CD4-positive, alpha-beta memory T cell (primary cell): ENCODE measurements at regions of chr4 and their contacts with region 1.

Region 1: DNA sequence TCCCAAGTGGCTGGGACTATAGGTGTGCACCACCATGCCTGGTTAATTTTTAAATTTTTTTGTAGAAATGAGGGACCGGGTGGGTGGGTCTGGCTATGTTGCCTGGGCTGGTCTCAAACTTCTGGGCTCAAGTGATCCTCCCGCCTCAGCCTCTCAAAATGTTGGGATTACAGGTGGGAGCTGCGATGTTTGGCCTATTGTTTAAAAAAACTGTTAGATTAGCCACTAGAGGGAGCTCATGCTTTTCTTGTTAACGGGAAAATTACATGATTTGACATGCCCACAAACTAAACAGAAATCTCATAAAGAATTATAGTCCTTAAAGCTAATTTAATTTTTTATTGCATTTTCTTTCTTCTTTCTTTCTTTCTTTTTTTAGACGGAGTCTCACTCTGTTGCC is 5.0 kb upstream of the SDAD1 start:
- DNase-seq: peak in 4 of 5 donors; percentile 52 to 62 (median 58)
- H3K4me3 ChIP-seq: no peak overlapping the region
- H3K4me3 Mint-ChIP-seq: no peak overlapping the region
- H3K27ac ChIP-seq: no peak overlapping the region
- H3K27ac Mint-ChIP-seq: no peak overlapping the region
- H3K4me1 ChIP-seq: peaks cover 4% of the 10 kb centered on the region
- H3K4me1 Mint-ChIP-seq: peaks cover 0 to 8% (median 4%) of the 10 kb centered on the region in 4 donors
- H3K27me3 ChIP-seq: no peaks in the 10 kb centered on the region
- H3K27me3 Mint-ChIP-seq: peaks cover 0 to 5% of the 10 kb centered on the region in 2 donors

Region 2: DNA sequence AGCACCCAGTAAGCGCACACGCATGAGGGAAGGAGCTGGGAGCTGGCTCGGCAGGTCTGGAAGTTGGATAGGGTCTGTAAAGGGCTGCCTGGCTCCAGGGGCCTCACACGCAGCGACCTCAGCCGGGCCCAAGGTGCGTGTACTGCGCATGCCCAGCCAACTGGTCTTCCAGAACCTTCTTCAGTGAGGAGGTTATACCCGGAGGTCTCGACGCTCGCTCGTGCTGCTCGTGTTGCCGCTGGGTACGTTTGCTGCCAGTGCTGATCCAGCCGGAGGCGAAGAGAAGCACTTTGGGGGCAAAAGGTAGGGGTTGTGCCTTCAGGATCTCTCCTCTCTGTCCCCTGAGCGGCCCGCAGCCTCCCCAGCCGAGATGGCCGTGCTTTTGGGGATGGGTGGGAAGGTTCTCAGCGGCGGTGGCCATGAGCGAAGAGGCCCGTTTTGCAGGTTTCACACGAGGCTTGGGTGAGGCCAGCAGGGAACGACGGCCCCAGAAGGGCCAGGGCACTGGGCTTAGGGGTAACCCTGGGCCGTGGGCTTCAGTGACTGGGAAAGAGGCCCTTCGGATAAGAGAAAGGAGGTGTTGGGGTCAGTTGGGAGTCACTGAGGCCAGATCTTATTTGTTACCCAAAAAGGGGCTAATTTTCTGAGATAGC is 15.4 kb after region 1 on chr4:
- CTCF ChIA-PET with region 1: interaction called, 11 read pairs
- POLR2A ChIA-PET with region 1: no interaction called
- intact Hi-C with region 1: no loop called
- DNase-seq: no peak
- H3K4me3 ChIP-seq: no peak overlapping the region
- H3K4me3 Mint-ChIP-seq: no peak overlapping the region
- H3K27ac ChIP-seq: no peak overlapping the region
- H3K27ac Mint-ChIP-seq: no peak overlapping the region
- H3K4me1 ChIP-seq: no peaks in the 10 kb centered on the region
- H3K4me1 Mint-ChIP-seq: no peaks in the 10 kb centered on the region
- H3K27me3 ChIP-seq: no peaks in the 10 kb centered on the region
- H3K27me3 Mint-ChIP-seq: peaks cover 3 to 4% of the 10 kb centered on the region in 2 donors

Region 3: GRCh38 chr4:76024065-76024464 is 28.3 kb after region 1 on chr4:
- CTCF ChIA-PET with region 1: interaction called, 11 read pairs
- POLR2A ChIA-PET with region 1: no interaction called
- intact Hi-C with region 1: no loop called
- DNase-seq: no peak
- H3K4me3 ChIP-seq: no peak overlapping the region
- H3K4me3 Mint-ChIP-seq: peak overlapping the region in 7 of 8 donors; percentile 0 to 72 (median 37)
- H3K27ac ChIP-seq: no peak overlapping the region
- H3K27ac Mint-ChIP-seq: peak overlapping the region in 3 of 7 donors; percentile 0 to 38 (median 19)
- H3K4me1 ChIP-seq: peaks cover 24% of the 10 kb centered on the region
- H3K4me1 Mint-ChIP-seq: peaks cover 19 to 32% (median 29%) of the 10 kb centered on the region in 4 donors
- H3K27me3 ChIP-seq: no peaks in the 10 kb centered on the region
- H3K27me3 Mint-ChIP-seq: no peaks in the 10 kb centered on the region

Region 4: DNA sequence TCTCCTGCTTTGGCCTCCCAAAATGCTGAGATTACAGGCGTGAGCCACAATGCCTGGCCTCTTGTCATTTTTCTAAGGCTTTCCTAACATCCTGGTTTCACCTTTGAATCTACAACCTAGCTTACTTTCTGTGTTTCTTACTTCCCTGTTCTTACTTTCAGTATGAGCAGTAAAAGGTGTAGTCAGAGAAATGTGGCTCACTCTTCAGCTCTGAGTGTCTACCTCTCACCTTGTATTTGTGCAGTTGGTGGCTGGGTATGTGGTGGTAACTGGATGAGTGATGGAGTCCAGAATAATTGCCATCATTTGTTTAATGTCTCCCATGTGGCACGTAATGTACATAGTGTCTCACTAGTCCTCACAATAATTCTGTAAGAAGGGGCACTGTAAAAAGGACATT is 59.3 kb after region 1 on chr4:
- CTCF ChIA-PET with region 1: interaction called, 15 read pairs
- POLR2A ChIA-PET with region 1: no interaction called
- intact Hi-C with region 1: no loop called
- DNase-seq: no peak
- H3K4me3 ChIP-seq: no peak overlapping the region
- H3K4me3 Mint-ChIP-seq: no peak overlapping the region
- H3K27ac ChIP-seq: no peak overlapping the region
- H3K27ac Mint-ChIP-seq: no peak overlapping the region
- H3K4me1 ChIP-seq: no peaks in the 10 kb centered on the region
- H3K4me1 Mint-ChIP-seq: peaks cover 0 to under 1% (median under 1%) of the 10 kb centered on the region in 4 donors
- H3K27me3 ChIP-seq: no peaks in the 10 kb centered on the region
- H3K27me3 Mint-ChIP-seq: peaks cover 0 to 4% of the 10 kb centered on the region in 2 donors

Region 5: DNA sequence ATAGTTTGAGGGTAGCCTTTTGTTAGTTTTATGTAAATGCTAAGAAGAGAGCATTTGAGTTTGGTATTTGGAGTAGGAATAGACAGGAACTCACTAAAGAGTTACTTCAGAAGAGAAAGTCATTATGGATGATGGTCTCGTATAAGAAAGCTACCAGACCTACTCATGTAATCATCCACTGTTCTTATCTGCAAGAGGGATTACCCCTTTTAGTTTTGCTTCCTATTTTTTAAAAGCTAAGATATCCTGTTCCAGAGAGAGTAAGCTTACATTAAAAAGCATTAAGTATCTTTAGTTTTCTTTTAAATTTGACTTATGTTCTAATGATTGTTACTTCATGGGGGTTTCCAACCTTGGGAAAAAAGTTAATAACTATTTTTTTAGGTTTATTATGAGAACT is 66.3 kb after region 1 on chr4:
- CTCF ChIA-PET with region 1: interaction called, 49 read pairs
- POLR2A ChIA-PET with region 1: no interaction called
- intact Hi-C with region 1: loop called (anchors 1 kb)
- DNase-seq: no peak
- H3K4me3 ChIP-seq: no peak overlapping the region
- H3K4me3 Mint-ChIP-seq: no peak overlapping the region
- H3K27ac ChIP-seq: no peak overlapping the region
- H3K27ac Mint-ChIP-seq: no peak overlapping the region
- H3K4me1 ChIP-seq: no peaks in the 10 kb centered on the region
- H3K4me1 Mint-ChIP-seq: peaks cover 0 to 1% (median under 1%) of the 10 kb centered on the region in 4 donors
- H3K27me3 ChIP-seq: no peaks in the 10 kb centered on the region
- H3K27me3 Mint-ChIP-seq: no peaks in the 10 kb centered on the region

Region 6: GRCh38 chr4:76067652-76068286 is 72.0 kb after region 1 on chr4:
- CTCF ChIA-PET with region 1: interaction called, 49 read pairs
- POLR2A ChIA-PET with region 1: no interaction called
- intact Hi-C with region 1: loop called (anchors 1 kb)
- DNase-seq: peak; percentile 61 to 67 (median 62)
- H3K4me3 ChIP-seq: no peak overlapping the region
- H3K4me3 Mint-ChIP-seq: no peak overlapping the region
- H3K27ac ChIP-seq: no peak overlapping the region
- H3K27ac Mint-ChIP-seq: no peak overlapping the region
- H3K4me1 ChIP-seq: no peaks in the 10 kb centered on the region
- H3K4me1 Mint-ChIP-seq: no peaks in the 10 kb centered on the region
- H3K27me3 ChIP-seq: no peaks in the 10 kb centered on the region
- H3K27me3 Mint-ChIP-seq: no peaks in the 10 kb centered on the region